ENCODE measurements at regions of chr4 and their contacts with region 1.

Region 1: DNA sequence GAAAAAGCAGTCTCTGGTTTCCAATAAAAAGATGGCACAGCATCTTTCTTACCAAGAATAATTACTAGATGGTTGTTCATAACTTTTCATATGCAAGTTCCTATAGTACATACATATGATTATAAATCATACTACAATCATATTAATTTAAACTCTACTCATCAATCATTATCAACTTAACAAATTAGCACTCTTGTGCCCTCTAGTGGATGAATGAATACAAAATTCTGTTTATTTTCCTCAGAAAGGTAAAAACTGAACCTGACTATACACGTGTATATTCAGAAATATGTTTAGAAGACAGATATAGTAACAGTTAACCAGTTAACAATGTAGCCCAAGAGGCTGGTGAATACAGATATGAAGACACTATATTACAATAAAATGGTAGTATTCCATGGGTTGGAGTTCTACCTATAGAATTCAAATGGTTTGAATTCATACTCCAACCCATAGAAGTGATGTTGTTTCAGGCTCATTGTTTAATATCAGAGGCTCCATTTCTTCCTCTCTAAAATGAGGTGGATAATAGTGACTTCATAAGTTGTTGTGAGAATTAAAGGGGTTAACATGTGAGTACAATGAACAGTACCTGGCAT is 100.0 kb downstream of the ADAMTS3 start:
- DNase-seq: no peak
- H3K4me3 ChIP-seq: no peak overlapping the region
- H3K27ac ChIP-seq: no peak overlapping the region
- H3K4me1 ChIP-seq: peaks cover 0 to 5% (median under 1%) of the 10 kb centered on the region in 4 donors
- H3K27me3 ChIP-seq: no peaks in the 10 kb centered on the region
- CTCF ChIP-seq: peak in 3 of 4 experiments; percentile 22 to 44 (median 28)
- EP300 ChIP-seq: no peak
- POLR2A ChIP-seq: no peak

Region 2: DNA sequence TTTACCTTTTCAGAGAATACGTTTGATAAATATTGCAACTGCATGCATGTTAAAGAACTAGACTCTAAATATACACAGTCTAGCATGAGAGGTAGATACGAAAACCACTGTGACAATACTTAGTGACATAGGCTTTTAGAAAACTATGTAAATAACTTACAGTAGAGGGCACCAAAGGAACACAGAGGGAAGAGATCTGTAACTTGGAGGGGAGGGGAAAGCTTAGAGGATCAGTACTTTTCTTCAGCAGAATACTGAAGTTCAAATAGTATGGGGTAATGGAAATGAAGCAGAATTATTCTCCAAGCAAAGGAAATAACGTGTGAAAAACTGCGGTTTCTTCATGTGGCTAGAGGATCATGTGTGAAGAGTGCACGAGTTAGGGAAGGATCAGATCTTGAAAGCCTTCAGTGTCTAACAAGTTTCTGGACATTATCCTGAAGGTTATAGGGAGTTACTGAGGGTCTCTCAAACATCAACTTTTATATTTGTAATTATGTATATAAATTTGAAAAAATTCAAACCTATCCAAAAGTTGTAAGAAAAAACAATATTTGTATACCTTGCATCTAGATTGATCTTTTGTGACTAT is 172.9 kb before region 1 on chr4:
- intact Hi-C with region 1: loop called (anchors 2 kb)
- DNase-seq: no peak
- H3K4me3 ChIP-seq: no peak overlapping the region
- H3K27ac ChIP-seq: no peak overlapping the region
- H3K4me1 ChIP-seq: no peaks in the 10 kb centered on the region
- H3K27me3 ChIP-seq: no peaks in the 10 kb centered on the region
- CTCF ChIP-seq: peak in 3 of 4 experiments; percentile 25 to 62 (median 31)
- EP300 ChIP-seq: no peak
- POLR2A ChIP-seq: no peak

Region 3: GRCh38 chr4:72326692-72327632 is 142.0 kb before region 1 on chr4:
- intact Hi-C with region 1: loop called (anchors 5 kb)
- DNase-seq: no peak
- H3K4me3 ChIP-seq: no peak overlapping the region
- H3K27ac ChIP-seq: no peak overlapping the region
- H3K4me1 ChIP-seq: no peaks in the 10 kb centered on the region
- H3K27me3 ChIP-seq: no peaks in the 10 kb centered on the region
- CTCF ChIP-seq: peak in 3 of 4 experiments; percentile 16 to 49 (median 49)
- EP300 ChIP-seq: no peak
- POLR2A ChIP-seq: no peak

Region 4: DNA sequence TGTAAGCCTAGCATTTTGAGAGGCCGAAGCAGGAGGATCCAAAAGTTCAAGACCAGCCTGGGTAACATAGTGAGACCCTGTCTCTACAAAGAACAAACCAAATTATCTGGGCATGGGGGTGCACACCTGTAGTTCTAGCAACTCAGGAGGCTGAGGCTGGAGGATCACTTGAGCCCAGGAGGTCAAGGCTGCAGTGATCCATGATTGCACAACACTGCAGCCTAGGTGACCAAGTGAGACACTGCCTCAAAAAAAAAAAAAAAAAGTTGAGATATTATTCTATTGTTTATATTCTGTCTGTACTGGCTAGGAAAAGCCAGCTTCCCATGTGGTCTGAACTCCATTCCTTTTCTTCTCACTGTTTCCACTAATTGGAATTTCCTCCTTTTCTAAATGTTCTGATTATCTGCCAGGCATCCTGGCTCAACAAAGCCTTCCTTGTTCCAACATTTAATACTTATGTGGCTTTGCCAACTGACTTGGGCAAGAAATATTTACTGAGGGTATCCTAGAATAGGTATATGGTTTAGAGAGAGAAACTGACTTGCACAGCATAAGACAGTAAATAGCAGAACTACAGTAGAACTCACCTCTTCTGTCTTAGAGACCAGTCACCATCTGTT is 275.2 kb after region 1 on chr4:
- intact Hi-C with region 1: no loop called
- DNase-seq: no peak
- H3K4me3 ChIP-seq: no peak overlapping the region
- H3K27ac ChIP-seq: no peak overlapping the region
- H3K4me1 ChIP-seq: peaks cover 0 to 4% (median 0%) of the 10 kb centered on the region in 4 donors
- H3K27me3 ChIP-seq: no peaks in the 10 kb centered on the region
- CTCF ChIP-seq: no peak
- EP300 ChIP-seq: no peak
- POLR2A ChIP-seq: no peak